ENCODE measurements at regions of chr20 and their contacts with region 1.

Region 1: GRCh38 chr20:5569021-5569420 is 181.2 kb upstream of the SHLD1 start:
- DNase-seq: peak; percentile 15
- CTCF ChIP-seq: peak; percentile 38

Region 2: DNA sequence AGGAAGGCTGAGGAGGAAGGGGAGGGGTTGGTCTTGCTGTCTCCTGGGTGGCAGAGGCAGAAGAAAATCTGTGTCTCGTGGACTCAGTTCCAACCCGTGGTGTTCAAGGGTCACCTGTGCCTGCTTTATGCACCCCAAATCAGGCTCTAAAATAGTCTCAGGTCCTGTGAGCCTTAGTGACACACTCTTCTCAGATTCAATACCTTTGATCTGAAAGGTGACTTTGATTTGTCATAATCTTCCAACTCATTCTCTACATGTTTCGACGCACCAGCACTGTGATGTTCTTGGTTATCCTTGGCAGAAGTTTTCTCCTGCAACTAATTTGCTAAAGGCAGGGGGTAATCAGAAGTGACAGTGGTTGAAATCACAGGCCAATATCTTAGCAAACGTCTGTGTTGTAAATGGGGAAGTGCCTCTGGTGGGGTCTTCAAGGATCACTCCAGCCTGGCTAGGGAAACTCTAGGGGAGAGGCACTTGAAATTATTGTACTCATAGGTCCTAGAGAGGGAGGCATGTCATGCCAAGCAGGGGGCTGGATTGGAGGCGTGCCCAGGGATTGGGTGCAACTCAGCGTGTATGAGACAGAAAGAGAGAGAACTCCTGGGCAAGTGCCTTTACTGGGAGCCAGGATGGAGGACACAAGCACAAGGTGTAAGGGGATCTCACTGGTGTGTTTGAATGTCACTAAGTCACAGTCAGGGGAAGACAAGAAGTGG is 866.3 kb before region 1 on chr20:
- in situ Hi-C with region 1: no loop called
- DNase-seq: no peak
- CTCF ChIP-seq: no peak

Region 3: GRCh38 chr20:4813863-4814695 is 754.9 kb before region 1 on chr20:
- in situ Hi-C with region 1: no loop called
- DNase-seq: peak; percentile 80
- CTCF ChIP-seq: no peak

Region 4: DNA sequence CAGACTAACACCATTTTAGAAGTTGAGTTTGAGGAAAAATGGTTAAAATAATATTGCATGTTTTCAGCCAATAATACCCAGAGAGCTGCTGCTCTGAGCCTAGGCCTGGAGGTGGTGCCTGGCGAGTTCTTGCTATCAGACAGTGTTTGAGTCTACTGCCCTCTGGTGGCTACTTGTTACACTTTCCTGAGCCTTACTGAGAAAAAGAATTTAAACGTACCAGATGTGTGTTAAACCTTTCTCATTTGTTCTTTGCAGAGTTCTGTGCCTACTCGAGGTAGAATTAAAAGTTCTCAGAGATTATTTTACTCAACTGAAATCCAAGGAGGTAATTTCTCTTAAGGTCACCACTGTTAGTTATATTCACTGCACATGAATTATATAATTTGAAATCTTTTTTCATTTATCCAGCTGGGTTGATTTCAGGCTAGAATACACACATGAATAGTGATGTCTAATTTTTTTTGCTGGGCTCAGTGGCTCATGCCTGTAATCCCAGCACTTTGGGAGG is 219.4 kb after region 1 on chr20:
- in situ Hi-C with region 1: loop called (anchors 10 kb)
- DNase-seq: peak; percentile 81
- CTCF ChIP-seq: peak; percentile 79

Measured in GM13977 (cell line).